Naive thymus-derived CD4-positive, alpha-beta T cell (primary cell): ENCODE measurements at regions of chr18 and their contacts with region 1.

Region 1: GRCh38 chr18:9614401-9615279 is at the start of gene PPP4R1:
- DNase-seq: peak; percentile 33 to 79 (median 56)
- ATAC-seq: peak; percentile 84
- H3K4me3 ChIP-seq: peak within 1 kb of the TSS; percentile 65
- H3K4me3 Mint-ChIP-seq: peak within 1 kb of the TSS; percentile 88 to 99 (median 96)
- H3K27ac ChIP-seq: peak within 1 kb of the TSS; percentile 65
- H3K27ac Mint-ChIP-seq: peak within 1 kb of the TSS; percentile 71 to 96 (median 89)
- H3K4me1 ChIP-seq: peaks cover 12 to 17% of the 10 kb centered on the region in 2 donors
- H3K4me1 Mint-ChIP-seq: peaks cover 26 to 46% (median 33%) of the 10 kb centered on the region in 7 donors
- H3K27me3 ChIP-seq: no peaks in the 10 kb centered on the region
- H3K27me3 Mint-ChIP-seq: peaks cover 0 to 3% (median 0%) of the 10 kb centered on the region in 5 donors
- total RNA-seq, gene PPP4R1: 33.0 to 54.6 (median 38.2) TPM

Region 2: DNA sequence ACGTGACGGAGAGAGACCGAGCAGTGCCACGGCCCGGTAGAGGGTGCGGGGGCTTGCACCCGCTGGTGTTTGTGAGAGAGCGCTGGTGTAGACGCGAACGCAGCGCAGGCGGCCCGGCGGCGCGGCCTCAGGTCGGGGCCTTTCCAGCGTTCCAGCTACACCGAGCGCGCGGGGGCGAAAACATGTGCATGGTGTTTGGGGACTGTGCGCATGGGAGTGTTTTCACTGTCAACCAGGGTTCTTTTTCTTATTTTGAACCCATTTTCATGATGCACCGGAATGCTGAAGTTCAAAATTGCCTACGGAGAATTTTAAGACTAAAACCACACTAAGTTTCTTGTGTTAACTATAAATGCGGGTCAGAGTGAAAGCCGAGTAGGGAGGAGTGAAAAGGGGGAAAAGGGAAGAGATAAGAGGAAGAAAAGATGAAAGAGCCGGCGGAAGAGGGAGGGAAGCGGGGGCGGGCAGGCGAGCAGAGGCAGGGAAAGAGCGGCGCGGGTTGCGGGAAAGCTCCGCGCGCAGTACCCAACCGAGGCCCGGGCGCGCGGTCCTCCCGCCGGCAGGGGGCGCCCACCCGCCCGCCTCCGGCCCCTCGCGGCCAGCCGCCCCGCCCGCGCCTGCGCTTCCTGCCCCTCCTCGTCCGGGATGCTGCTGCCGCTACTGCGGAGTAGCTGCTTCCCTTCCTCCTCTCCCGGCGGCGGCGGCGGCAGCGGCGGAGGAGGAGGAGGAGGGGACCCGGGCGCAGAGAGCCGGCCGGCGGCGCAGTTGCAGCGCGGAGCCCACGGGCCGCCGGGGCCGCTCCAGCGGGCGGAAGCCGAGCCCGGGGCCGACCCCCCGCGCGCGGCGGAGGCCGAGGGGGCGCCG is 1005.6 kb before region 1 on chr18 and contains the start of gene RAB12:
- CTCF ChIA-PET with region 1: no interaction called
- POLR2A ChIA-PET with region 1: interaction called, 3 read pairs
- intact Hi-C with region 1: loop called (anchors 1 to 10 kb)
- DNase-seq: peak; percentile 76 to 93 (median 87)
- ATAC-seq: peak; percentile 97
- H3K4me3 ChIP-seq: peak within 1 kb of the TSS; percentile 78
- H3K4me3 Mint-ChIP-seq: peak within 1 kb of the TSS; percentile 88 to 97 (median 94)
- H3K27ac ChIP-seq: peak within 1 kb of the TSS; percentile 76
- H3K27ac Mint-ChIP-seq: peak within 1 kb of the TSS; percentile 91 to 99 (median 96)
- H3K4me1 ChIP-seq: peaks cover 18 to 29% of the 10 kb centered on the region in 2 donors
- H3K4me1 Mint-ChIP-seq: peaks cover 42 to 63% (median 56%) of the 10 kb centered on the region in 7 donors
- H3K27me3 ChIP-seq: no peaks in the 10 kb centered on the region
- H3K27me3 Mint-ChIP-seq: peaks cover 0 to 16% (median 7%) of the 10 kb centered on the region in 5 donors
- total RNA-seq, gene RAB12: 19.8 to 26.2 (median 23.0) TPM

Region 3: GRCh38 chr18:9102508-9103375 is 511.9 kb before region 1 on chr18 and contains the start of gene NDUFV2:
- CTCF ChIA-PET with region 1: no interaction called
- POLR2A ChIA-PET with region 1: no interaction called
- intact Hi-C with region 1: loop called in 1 of 2 experiments (anchors 10 kb)
- DNase-seq: peak; percentile 93 to 99 (median 97)
- ATAC-seq: peak; percentile 97
- H3K4me3 ChIP-seq: peak within 1 kb of the TSS; percentile 81
- H3K4me3 Mint-ChIP-seq: peak within 1 kb of the TSS; percentile 79 to 98 (median 96)
- H3K27ac ChIP-seq: peak within 1 kb of the TSS; percentile 82
- H3K27ac Mint-ChIP-seq: peak within 1 kb of the TSS; percentile 90 to 98 (median 95)
- H3K4me1 ChIP-seq: peaks cover 40 to 48% of the 10 kb centered on the region in 2 donors
- H3K4me1 Mint-ChIP-seq: peaks cover 46 to 61% (median 57%) of the 10 kb centered on the region in 7 donors
- H3K27me3 ChIP-seq: no peaks in the 10 kb centered on the region
- H3K27me3 Mint-ChIP-seq: no peaks in the 10 kb centered on the region
- total RNA-seq, gene NDUFV2: 127 to 198 (median 171) TPM

Region 4: GRCh38 chr18:9474983-9475642 is 139.5 kb before region 1 on chr18 and contains the start of gene RALBP1:
- CTCF ChIA-PET with region 1: no interaction called
- POLR2A ChIA-PET with region 1: no interaction called
- intact Hi-C with region 1: loop called (anchors 1 kb)
- DNase-seq: peak; percentile 92 to 98 (median 96)
- ATAC-seq: peak; percentile 99
- H3K4me3 ChIP-seq: peak within 1 kb of the TSS; percentile 88
- H3K4me3 Mint-ChIP-seq: peak within 1 kb of the TSS; percentile 84 to 99 (median 97)
- H3K27ac ChIP-seq: peak within 1 kb of the TSS; percentile 81
- H3K27ac Mint-ChIP-seq: peak within 1 kb of the TSS; percentile 82 to 97 (median 94)
- H3K4me1 ChIP-seq: peaks cover 0 to 14% of the 10 kb centered on the region in 2 donors
- H3K4me1 Mint-ChIP-seq: peaks cover 21 to 41% (median 30%) of the 10 kb centered on the region in 7 donors
- H3K27me3 ChIP-seq: no peaks in the 10 kb centered on the region
- H3K27me3 Mint-ChIP-seq: peaks cover 0 to 24% (median 5%) of the 10 kb centered on the region in 5 donors
- total RNA-seq, gene RALBP1: 20.3 to 47.8 (median 42.2) TPM

Region 5: DNA sequence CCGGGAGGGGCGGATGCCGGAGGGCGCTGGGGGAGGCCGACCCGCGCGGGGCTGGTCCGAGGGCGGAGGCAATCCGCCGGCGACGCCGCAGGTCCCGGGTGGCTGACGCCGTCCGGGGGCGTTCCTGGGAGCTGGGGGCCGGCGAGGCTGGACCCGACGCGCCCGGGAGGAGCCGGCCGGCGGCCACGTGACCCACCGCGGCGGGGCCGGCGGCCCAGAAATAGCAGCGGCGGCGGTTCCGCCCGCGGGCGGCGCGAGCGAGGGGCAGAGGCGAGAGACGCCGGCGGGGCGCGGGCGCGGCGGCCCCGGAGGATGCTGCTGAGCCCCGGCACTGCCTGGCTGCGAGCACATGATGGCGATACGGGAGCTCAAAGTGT is 93.4 kb after region 1 on chr18 and contains the start of gene RAB31:
- CTCF ChIA-PET with region 1: no interaction called
- POLR2A ChIA-PET with region 1: no interaction called
- intact Hi-C with region 1: loop called in 1 of 2 experiments (anchors 10 kb)
- DNase-seq: peak in 2 of 9 donors; percentile 31 to 39
- ATAC-seq: peak; percentile 81
- H3K4me3 ChIP-seq: no peak within 1 kb of the TSS
- H3K4me3 Mint-ChIP-seq: peak within 1 kb of the TSS; percentile 58 to 81 (median 74)
- H3K27ac ChIP-seq: no peak within 1 kb of the TSS
- H3K27ac Mint-ChIP-seq: no peak within 1 kb of the TSS
- H3K4me1 ChIP-seq: no peaks in the 10 kb centered on the region
- H3K4me1 Mint-ChIP-seq: peaks cover 0 to 36% (median 29%) of the 10 kb centered on the region in 7 donors
- H3K27me3 ChIP-seq: peaks cover 3 to 4% of the 10 kb centered on the region in 2 donors
- H3K27me3 Mint-ChIP-seq: peaks cover 71 to 88% (median 81%) of the 10 kb centered on the region in 5 donors
- total RNA-seq, gene RAB31: 1.1 to 48.6 (median 2.3) TPM

Region 6: GRCh38 chr18:9913526-9914333 is 299.1 kb after region 1 on chr18 and contains the start of gene VAPA:
- CTCF ChIA-PET with region 1: no interaction called
- POLR2A ChIA-PET with region 1: interaction called, 4 read pairs
- intact Hi-C with region 1: loop called (anchors 1 kb)
- DNase-seq: peak; percentile 92 to 98 (median 95)
- ATAC-seq: peak; percentile 90
- H3K4me3 ChIP-seq: peak within 1 kb of the TSS; percentile 99
- H3K4me3 Mint-ChIP-seq: peak within 1 kb of the TSS; percentile 89 to 96 (median 93)
- H3K27ac ChIP-seq: peak within 1 kb of the TSS; percentile 98
- H3K27ac Mint-ChIP-seq: peak within 1 kb of the TSS; percentile 85 to 98 (median 96)
- H3K4me1 ChIP-seq: peaks cover 34% of the 10 kb centered on the region in 2 donors
- H3K4me1 Mint-ChIP-seq: peaks cover 18 to 33% (median 28%) of the 10 kb centered on the region in 7 donors
- H3K27me3 ChIP-seq: no peaks in the 10 kb centered on the region
- H3K27me3 Mint-ChIP-seq: peaks cover 0 to 19% (median 0%) of the 10 kb centered on the region in 5 donors
- total RNA-seq, gene VAPA: 109 to 199 (median 151) TPM

Region 7: GRCh38 chr18:10032331-10033015 is 417.8 kb after region 1 on chr18:
- CTCF ChIA-PET with region 1: no interaction called
- POLR2A ChIA-PET with region 1: no interaction called
- intact Hi-C with region 1: no loop called
- DNase-seq: peak in 4 of 9 donors; percentile 5 to 19 (median 12)
- ATAC-seq: peak; percentile 73
- H3K4me3 ChIP-seq: no peak overlapping the region
- H3K4me3 Mint-ChIP-seq: peak overlapping the region in 9 of 10 donors; percentile 34 to 77 (median 63)
- H3K27ac ChIP-seq: no peak overlapping the region
- H3K27ac Mint-ChIP-seq: peak overlapping the region in 2 of 9 donors; percentile 28 to 74
- H3K4me1 ChIP-seq: no peaks in the 10 kb centered on the region
- H3K4me1 Mint-ChIP-seq: peaks cover 0 to 10% (median 6%) of the 10 kb centered on the region in 7 donors
- H3K27me3 ChIP-seq: no peaks in the 10 kb centered on the region
- H3K27me3 Mint-ChIP-seq: peaks cover 20 to 42% (median 24%) of the 10 kb centered on the region in 5 donors

Region 8: DNA sequence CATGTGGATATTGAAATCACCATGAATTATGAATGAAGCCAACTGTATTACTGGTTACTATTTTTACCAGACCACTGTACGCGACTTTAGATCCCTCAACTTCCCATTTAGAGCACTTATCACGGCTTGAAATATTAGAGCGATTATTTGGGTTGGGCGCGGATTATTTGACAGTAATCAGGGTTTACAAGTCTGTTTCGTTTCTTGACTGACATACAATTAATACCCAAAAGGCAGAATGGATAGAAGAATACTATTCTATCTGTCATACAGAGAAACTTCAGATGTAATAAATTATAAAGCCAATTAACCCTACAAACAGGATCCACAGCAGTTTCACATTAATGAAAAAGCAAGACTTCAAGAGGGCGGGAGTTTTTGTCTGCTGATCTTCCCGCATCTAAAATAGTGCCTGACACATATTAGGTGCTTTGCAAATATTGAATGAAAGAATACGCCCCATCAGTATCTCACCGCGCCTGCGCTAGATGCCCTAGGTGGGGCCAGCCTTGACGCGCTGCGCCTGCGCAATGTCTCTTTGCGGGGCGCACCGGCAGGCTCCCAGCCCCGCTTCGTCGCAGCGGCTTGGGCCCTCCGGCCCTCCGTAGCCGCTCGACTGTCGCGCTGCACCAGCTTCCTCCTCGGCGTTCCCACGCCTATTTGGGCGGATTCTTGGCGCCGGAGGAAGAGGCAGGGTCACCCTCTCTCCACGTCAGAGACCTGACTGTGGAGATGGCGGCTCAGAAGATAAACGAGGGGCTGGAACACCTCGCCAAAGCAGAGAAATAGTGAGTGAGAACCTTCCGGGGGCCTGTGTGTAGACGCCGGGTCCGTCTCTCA is 911.0 kb after region 1 on chr18 and contains the start of gene NAPG:
- CTCF ChIA-PET with region 1: no interaction called
- POLR2A ChIA-PET with region 1: interaction called, 3 read pairs
- intact Hi-C with region 1: loop called (anchors 2 to 10 kb)
- DNase-seq: peak; percentile 88 to 94 (median 91)
- ATAC-seq: peak; percentile 94
- H3K4me3 ChIP-seq: peak within 1 kb of the TSS; percentile 93
- H3K4me3 Mint-ChIP-seq: peak within 1 kb of the TSS; percentile 94 to 99 (median 98)
- H3K27ac ChIP-seq: peak within 1 kb of the TSS; percentile 76
- H3K27ac Mint-ChIP-seq: peak within 1 kb of the TSS; percentile 84 to 99 (median 96)
- H3K4me1 ChIP-seq: peaks cover 4 to 22% of the 10 kb centered on the region in 2 donors
- H3K4me1 Mint-ChIP-seq: peaks cover 43 to 62% (median 53%) of the 10 kb centered on the region in 7 donors
- H3K27me3 ChIP-seq: no peaks in the 10 kb centered on the region
- H3K27me3 Mint-ChIP-seq: peaks cover 0 to 10% (median 0%) of the 10 kb centered on the region in 5 donors
- total RNA-seq, gene NAPG: 28.1 to 35.7 (median 30.0) TPM